Activated T-helper 2 cell treated with anti-CD3 and anti-CD28 coated beads, Interferon-gamma antibody, Interleukin-2, Interleukin-4, amounts not matched to agents 10 μg/mL and 5 μg/mL and 100 μg/mL, durations not matched to agents 14 hours and 24 hours and 36 hours (primary cell): ENCODE measurements at regions of chr17 and their contacts with region 1.

Region 1: GRCh38 chr17:76466775-76467130 is 650 bp upstream of the AANAT start:
- DNase-seq: no peak
- H3K4me3 Mint-ChIP-seq: no peak overlapping the region
- H3K27ac Mint-ChIP-seq: no peak overlapping the region
- H3K4me1 Mint-ChIP-seq: peaks cover 2% of the 10 kb centered on the region
- H3K27me3 Mint-ChIP-seq: peaks cover 2% of the 10 kb centered on the region

Region 2: DNA sequence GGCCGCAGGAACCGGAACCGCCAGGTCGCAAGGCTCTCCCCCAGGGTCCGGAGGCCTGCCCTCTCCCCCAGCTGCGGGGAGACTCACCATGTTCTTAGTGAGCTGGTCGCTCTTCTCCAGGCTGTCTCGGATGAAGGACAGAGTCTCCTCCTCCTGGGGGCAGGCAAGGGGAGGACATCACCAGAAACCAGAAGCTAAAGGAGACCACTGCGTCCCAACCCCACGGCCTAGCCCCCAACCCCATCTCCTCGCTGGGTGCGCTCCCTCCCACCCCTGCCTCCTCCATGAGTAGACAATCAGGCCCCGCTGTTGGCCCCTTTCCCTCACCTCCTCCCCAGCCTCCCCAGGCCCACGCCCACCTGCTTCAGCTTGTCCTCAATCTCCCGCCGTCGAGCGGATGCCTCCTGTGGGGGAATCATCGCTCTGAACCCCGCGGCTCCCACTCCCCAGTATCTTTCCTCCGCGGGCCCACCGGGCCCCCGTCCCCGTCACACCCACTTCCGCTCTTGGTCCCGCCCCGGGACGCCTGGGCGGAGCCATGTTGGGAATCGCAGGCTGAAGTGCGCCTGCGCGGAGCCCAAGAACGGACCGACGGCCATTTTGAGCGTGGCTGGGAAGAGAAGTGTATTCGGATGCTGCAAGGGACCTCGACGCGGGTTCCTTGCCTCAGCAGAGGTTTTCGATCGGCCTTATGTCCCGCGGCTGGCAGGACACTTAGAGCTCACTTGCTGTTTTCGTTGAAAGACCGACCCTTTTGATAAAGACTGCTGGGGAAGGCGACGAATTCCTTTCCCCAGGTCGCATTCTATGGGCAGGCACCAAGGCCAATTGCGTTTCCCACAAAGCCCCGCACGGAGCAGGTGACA is 363.2 kb before region 1 on chr17 and contains the start of gene EXOC7:
- intact Hi-C with region 1: no loop called
- DNase-seq: peak; percentile 91
- H3K4me3 Mint-ChIP-seq: peak within 1 kb of the TSS; percentile 96
- H3K27ac Mint-ChIP-seq: peak within 1 kb of the TSS; percentile 93
- H3K4me1 Mint-ChIP-seq: peaks cover 10% of the 10 kb centered on the region
- H3K27me3 Mint-ChIP-seq: no peaks in the 10 kb centered on the region
- total RNA-seq, gene EXOC7: 103 and 110 TPM in 2 replicates

Region 3: DNA sequence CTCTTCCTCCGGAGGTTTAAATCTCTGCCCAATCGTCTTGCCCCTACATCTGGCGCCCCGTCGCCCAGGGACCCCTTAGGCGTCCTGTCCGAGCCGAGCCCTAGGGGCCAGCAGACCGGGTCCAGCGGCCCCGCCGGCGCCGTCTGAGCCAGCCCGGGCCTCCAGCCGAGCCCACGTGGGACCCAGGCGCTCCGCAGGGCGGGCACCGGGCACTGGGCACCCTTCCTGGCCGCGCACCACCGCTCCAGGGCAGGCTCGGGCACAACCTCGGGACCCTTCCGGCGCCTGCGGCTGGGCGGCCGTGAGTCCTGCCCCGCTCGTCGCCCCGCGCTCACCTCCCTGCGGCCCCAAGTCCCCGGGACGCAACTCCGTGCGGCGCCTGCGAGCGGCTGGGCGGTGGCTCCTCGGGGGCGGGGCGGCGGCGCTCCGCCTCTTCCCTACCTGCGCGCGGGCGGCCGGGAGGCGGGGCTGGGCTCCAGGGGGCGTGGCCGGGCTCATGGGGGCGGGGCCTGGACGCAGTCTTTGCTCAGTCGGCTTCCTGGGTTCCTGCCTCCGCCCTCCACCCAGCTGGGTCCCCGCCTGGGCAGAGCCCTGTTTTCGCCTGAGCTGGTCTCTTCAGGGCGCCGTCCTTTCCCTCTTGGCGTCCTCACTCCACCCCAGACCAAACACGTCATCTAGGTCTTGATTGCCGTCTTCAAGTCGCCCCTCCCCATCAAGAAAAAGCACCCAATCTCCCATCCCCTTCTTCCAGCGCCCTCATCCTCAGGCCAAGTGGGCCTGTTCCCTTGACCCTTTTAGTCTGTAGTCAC is 34.5 kb after region 1 on chr17 and contains the start of gene RHBDF2:
- intact Hi-C with region 1: loop called (anchors 1 kb)
- DNase-seq: peak; percentile 94
- H3K4me3 Mint-ChIP-seq: peak within 1 kb of the TSS; percentile 88
- H3K27ac Mint-ChIP-seq: peak within 1 kb of the TSS; percentile 92
- H3K4me1 Mint-ChIP-seq: peaks cover 20% of the 10 kb centered on the region
- H3K27me3 Mint-ChIP-seq: no peaks in the 10 kb centered on the region
- total RNA-seq, gene RHBDF2: 45.3 and 48.5 TPM in 2 replicates

Region 4: DNA sequence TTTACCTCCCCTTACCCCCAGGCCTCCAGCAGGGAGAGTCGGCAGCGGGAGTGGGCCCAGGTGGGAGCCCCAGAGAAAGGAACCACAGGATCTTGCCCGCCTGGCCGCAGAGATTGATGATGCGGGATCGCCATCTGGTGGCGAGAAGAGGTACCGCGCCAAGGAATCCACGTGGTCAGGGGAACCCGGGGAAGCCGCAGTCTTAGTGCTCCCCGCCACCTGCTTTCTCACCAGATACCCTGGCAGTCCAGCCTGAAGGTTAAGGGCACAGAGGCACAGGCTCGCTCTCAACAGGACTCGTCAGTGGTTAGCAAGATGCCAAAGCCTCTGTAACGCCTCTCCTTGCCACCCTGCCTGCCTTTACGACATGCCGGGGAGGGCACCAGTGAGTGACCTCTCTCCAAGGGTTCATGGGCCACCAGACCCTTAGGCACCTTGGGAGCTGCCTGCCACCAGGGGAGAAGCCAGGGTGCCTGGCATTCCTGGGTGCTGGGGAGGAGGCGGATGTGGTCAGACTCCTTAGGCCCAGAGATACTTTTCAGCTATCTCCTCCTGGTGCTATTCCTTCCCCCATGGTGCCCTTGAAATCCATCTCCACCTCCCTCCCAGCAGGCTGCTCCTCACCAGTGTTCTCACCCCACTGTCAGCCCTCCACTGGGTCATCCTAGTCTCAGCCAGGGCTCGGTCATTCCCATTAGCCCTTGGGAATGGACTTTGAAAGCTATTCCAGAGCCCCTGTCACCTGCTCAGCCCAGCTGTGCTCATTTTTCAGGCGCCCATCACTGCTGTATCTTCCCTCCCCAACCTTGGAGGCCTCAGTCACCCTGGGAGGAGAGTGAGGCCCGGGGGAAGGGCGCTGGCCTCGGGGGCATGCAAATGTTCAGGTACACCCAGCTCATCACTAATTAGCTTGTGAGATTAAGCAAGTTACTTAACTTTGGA is 39.9 kb after region 1 on chr17:
- intact Hi-C with region 1: loop called (anchors 1 kb)
- DNase-seq: peak; percentile 84
- H3K4me3 Mint-ChIP-seq: no peak overlapping the region
- H3K27ac Mint-ChIP-seq: no peak overlapping the region
- H3K4me1 Mint-ChIP-seq: peaks cover 19% of the 10 kb centered on the region
- H3K27me3 Mint-ChIP-seq: peaks cover 7% of the 10 kb centered on the region

Region 5: DNA sequence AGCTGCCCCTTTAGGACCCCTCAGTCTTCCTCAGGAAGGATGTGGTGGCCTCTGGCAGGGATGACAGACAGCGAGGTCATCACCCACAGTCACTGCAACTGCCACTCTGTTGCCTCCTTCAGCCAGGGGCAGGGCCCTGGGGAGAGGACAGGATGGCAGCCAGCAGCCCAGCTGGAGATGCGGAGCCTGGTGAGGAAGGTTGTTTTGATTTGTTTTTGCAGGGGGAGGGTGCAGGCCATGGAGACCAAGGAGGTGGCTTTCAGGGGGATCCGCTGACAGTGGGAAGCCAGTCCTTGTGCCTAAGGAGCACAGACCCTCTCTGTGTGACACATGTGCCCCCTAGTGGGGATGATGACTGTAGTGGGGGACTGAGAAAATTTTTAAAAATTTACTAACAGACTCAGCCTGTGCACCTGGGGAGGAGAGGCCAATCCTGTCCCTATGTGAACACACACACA is 80.5 kb after region 1 on chr17:
- intact Hi-C with region 1: loop called (anchors 1 kb)
- DNase-seq: peak; percentile 35
- H3K4me3 Mint-ChIP-seq: no peak overlapping the region
- H3K27ac Mint-ChIP-seq: no peak overlapping the region
- H3K4me1 Mint-ChIP-seq: peaks cover 4% of the 10 kb centered on the region
- H3K27me3 Mint-ChIP-seq: peaks cover 8% of the 10 kb centered on the region